SK-N-SH (cell line): ENCODE measurements at regions of chr15 and their contacts with region 1.

Region 1: GRCh38 chr15:65312400-65312916 is 8.0 kb downstream of the RNU5B-1 start:
- DNase-seq: peak; percentile 77
- H3K4me3 ChIP-seq: no peak overlapping the region
- H3K27ac ChIP-seq: peak overlapping the region in 1 of 2 experiments; percentile 56; a peak in 2 of 4 replicates
- H3K4me1 ChIP-seq: peaks cover 0 to 8% of the 10 kb centered on the region in 2 experiments; a peak in 1 of 4 replicates
- H3K27me3 ChIP-seq: no peaks in the 10 kb centered on the region; the same call in 1 of the 2 replicates
- CTCF ChIP-seq: no peak
- EP300 ChIP-seq: peak in 1 of 2 experiments; percentile 54; a peak in 2 of 4 replicates
- RAD21 ChIP-seq: peak; percentile 32; the same call in 1 of the 2 replicates

Region 2: DNA sequence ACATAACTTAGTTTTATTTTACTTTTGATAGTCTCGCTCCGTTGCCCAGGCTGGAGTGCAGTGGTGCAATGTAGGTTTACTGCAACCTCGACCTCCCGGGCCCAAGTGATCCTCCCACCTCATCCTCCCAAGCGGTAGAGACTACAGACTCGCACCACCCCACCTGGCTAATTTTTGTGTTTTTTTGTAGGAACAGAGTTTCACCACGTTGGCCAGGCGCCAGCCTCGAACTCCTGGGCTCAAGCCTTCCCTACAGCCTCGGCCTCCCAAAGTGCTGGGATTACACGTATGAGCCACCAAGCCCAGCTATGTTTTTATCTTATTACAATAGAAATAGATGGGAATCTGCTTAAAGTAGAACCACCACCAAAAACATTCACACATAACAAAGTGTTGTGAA is 13.7 kb before region 1 on chr15:
- CTCF ChIA-PET with region 1: interaction called, 13 read pairs
- POLR2A ChIA-PET with region 1: interaction called, 4 read pairs
- DNase-seq: no peak
- H3K4me3 ChIP-seq: no peak overlapping the region
- H3K27ac ChIP-seq: no peak overlapping the region
- H3K4me1 ChIP-seq: peaks cover 5% of the 10 kb centered on the region in 2 experiments; a peak in 2 of 4 replicates
- H3K27me3 ChIP-seq: no peaks in the 10 kb centered on the region
- CTCF ChIP-seq: no peak
- EP300 ChIP-seq: no peak
- RAD21 ChIP-seq: no peak